K562 (cell line): ENCODE measurements at regions of chr14 and their contacts with region 1.

Region 1: GRCh38 chr14:74712499-74713394 is at the starts of genes AREL1 and FCF1:
- DNase-seq: peak; percentile 79 to 91 (median 84)
- ATAC-seq: peak; percentile 94
- H3K4me3 ChIP-seq: peak within 1 kb of the TSS; percentile 57
- H3K27ac ChIP-seq: peak within 1 kb of the TSS; percentile 82
- H3K4me1 ChIP-seq: peaks cover 0 to 8% of the 10 kb centered on the region in 2 experiments; a peak in 2 of 5 replicates
- H3K27me3 ChIP-seq: no peaks in the 10 kb centered on the region
- CTCF ChIP-seq: no peak
- EP300 ChIP-seq: 0 out of 2 replicates have a peak, but pooled peaks have one; percentile 39
- POLR2A ChIP-seq: peak; percentile 82
- RAD21 ChIP-seq: no peak
- polyA plus RNA-seq, gene AREL1: 6.0 to 7.6 TPM
- polyA plus RNA-seq, gene FCF1: 6.8 to 18.6 TPM

Region 2: DNA sequence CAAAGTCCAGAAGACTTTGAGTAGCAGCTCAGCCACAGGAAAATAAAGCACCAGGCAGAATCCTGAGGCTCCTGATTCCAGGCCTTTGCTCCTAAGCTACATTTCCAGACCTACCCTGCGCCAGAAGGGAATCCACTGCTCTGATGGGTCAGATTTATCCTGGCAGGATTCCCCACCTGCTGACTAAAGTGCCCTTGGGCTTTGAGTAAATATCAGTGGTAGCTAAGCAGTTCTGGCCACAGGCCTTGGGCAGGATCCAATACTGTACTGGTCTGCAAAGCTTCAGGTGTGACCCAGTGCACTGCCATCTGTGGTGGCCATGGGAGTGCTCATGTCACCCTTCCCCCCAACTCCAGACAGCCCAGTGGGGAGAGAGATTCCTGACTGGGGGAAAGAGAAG is 1186.2 kb before region 1 on chr14:
- CTCF ChIA-PET with region 1: no interaction called
- POLR2A ChIA-PET with region 1: no interaction called
- in situ Hi-C with region 1: loop called (anchors 10 kb)
- intact Hi-C with region 1: no loop called
- DNase-seq: peak in 1 of 4 experiments; percentile 0
- ATAC-seq: no peak
- H3K4me3 ChIP-seq: no peak overlapping the region
- H3K27ac ChIP-seq: no peak overlapping the region
- H3K4me1 ChIP-seq: no peaks in the 10 kb centered on the region
- H3K27me3 ChIP-seq: 0 out of 5 replicates have a peak, but pooled peaks cover 0 to 4% of the 10 kb centered on the region in 2 experiments
- CTCF ChIP-seq: no peak
- EP300 ChIP-seq: no peak
- POLR2A ChIP-seq: no peak
- RAD21 ChIP-seq: no peak

Region 3: DNA sequence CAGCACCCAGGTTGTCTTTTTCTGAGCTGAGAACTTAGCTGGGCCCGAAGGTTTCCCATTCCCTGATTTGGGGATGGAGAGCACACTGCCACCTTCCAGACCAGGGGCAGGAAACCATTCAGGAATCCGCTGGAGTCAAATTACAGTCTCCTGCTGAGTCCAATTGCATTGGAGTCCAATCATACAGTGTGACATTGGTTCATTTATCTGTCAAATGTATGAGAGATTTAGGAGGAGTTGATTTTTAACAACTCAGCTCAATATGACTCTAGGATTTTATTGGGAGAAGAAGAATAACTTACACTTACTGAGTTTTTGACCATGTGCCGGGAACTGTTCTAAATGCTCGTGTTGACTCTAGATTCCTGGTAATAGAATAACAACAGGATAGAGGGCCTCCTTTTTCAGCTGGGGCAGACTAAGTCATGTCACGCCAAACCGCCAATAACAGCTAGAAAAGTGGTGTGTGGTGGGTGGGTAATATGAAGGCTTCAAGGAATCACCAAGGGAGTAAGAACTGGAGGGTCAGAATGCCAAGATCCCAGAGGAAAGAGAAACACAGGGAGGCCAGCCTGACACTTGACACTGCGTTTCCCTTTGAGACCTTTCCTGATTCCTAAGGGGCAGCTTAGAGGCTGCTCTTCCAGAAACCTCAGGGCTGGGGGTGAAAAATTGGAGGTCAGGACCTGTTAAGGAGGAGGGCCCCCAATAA is 298.2 kb before region 1 on chr14:
- CTCF ChIA-PET with region 1: no interaction called
- POLR2A ChIA-PET with region 1: no interaction called
- in situ Hi-C with region 1: no loop called
- intact Hi-C with region 1: no loop called
- DNase-seq: no peak
- ATAC-seq: no peak
- H3K4me3 ChIP-seq: no peak overlapping the region
- H3K27ac ChIP-seq: no peak overlapping the region
- H3K4me1 ChIP-seq: no peaks in the 10 kb centered on the region
- H3K27me3 ChIP-seq: peaks cover 0 to 11% of the 10 kb centered on the region in 2 experiments; a peak in 3 of 5 replicates
- CTCF ChIP-seq: no peak
- EP300 ChIP-seq: no peak
- POLR2A ChIP-seq: no peak
- RAD21 ChIP-seq: no peak

Region 4: DNA sequence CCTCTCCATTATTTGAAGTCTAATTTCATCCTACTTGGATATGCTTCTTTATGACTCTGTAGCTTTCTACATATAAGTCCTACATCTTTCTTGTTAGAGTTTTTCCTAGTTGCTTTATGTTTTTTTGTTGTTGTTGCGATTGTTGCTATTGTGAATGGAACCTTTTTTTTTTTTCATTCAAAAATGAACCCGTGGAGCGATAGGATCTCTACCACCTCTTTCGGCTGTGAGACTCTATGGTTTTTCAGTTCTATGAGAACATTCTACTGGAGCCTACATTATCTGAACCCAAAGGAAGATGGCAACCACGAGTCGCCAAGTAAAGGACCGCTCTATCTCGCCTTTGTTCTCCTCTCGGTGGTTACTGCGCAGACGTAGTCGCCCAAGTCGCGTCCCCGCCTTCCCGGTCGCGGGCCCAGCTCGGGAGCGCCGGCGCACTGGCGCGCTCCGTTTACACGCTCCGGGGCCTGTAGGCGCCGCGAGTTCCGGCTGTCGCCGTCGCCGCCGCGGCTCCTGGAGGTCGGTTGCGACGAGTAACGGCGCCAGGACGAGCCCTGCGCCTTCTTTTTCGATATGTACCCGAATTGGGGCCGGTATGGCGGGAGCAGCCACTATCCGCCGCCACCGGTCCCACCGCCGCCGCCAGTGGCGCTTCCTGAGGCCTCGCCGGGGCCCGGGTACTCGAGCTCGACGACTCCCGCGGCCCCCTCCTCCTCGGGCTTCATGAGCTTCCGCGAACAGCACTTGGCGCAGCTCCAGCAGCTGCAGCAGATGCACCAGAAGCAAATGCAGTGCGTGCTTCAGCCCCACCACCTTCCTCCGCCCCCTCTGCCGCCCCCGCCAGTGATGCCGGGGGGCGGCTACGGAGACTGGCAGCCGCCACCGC is 50.4 kb after region 1 on chr14 and contains the start of gene YLPM1:
- CTCF ChIA-PET with region 1: no interaction called
- POLR2A ChIA-PET with region 1: no interaction called
- in situ Hi-C with region 1: no loop called
- intact Hi-C with region 1: loop called (anchors 5 kb)
- DNase-seq: peak; percentile 85 to 94 (median 86)
- ATAC-seq: peak; percentile 97
- H3K4me3 ChIP-seq: peak within 1 kb of the TSS; percentile 71
- H3K27ac ChIP-seq: peak within 1 kb of the TSS; percentile 87
- H3K4me1 ChIP-seq: peaks cover 2 to 8% of the 10 kb centered on the region in 2 experiments; a peak in 4 of 5 replicates
- H3K27me3 ChIP-seq: no peaks in the 10 kb centered on the region
- CTCF ChIP-seq: peak; percentile 52 to 73 (median 69)
- EP300 ChIP-seq: no peak
- POLR2A ChIP-seq: peak; percentile 88
- RAD21 ChIP-seq: no peak
- polyA plus RNA-seq, gene YLPM1: 7.3 to 8.6 TPM